Activated naive CD4-positive, alpha-beta T cell treated with anti-CD3 and anti-CD28 coated beads for 36 hours (primary cell): ENCODE measurements at regions of chr3 and their contacts with region 1.

Region 1: DNA sequence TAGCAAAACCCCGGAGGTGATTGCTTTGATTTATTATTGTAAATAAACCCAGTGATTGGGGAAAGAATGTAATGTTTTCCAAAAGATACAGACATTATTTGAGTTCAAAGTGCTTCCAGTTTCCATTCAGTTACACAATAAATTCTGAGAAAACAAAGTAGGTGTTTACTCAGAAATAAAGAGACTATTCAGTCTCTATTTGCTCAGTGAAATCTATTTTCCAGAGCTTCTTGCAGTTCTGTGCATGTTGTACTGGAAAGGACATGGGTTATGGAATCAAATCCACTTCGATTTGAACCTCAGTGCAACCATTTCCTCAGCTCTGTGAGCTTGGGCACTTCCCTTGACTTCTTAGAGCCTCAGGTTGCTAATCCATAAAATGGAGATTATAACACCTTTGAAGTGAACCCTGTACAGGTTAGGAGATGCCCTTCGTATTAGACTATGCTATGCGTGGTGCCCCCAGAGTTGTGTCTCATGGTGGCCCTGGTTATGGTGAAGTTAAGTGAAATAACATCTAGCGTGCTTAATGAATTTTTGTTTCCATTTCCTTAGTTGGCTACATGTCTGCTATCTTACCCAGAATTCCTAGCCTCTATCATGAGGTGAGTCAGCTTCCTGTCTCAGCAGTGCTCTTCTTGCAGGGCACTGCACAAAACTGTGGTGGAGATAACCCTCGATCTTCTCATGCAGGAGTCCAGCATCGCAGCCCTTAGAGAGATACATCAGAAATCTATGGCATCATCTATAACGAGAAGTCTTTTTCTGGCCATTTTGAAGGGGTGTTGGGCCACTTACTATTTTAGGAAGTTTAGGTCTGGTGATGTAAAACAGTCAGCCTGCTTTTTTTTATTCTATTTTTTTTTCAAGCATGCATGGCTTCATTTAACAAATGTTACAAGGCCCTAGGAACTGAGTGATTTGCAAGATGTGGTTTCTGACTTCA is 97.7 kb downstream of the RPL39L start:
- DNase-seq: peak; percentile 73
- H3K4me3 Mint-ChIP-seq: peak overlapping the region; percentile 60
- H3K27ac Mint-ChIP-seq: peak overlapping the region; percentile 98
- H3K4me1 Mint-ChIP-seq: peaks cover 82% of the 10 kb centered on the region
- H3K27me3 Mint-ChIP-seq: no peaks in the 10 kb centered on the region

Region 2: DNA sequence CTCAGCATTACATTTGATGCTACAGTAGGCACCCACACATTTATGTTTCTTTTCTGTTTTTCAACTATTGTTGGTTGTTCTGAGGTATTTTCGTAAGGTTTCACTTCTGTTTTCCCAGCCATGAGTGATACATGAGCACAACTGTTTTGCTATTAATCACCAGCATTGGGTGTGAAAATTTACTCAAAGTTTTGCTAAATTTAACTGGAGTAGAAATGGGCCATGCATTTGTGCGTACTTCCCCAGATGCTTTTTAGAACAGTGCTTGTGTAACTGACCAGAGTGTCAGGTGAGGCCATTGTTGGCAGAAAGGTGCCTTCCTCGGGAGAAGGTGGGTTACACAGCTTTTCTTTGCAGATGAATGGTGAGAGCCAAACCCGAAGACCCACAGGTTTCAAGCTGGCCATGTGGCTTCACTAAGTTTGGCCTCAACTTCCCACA is 40.9 kb before region 1 on chr3:
- CTCF ChIA-PET with region 1: interaction called, 3 read pairs
- intact Hi-C with region 1: loop called (anchors 1 kb)
- DNase-seq: peak; percentile 76
- H3K4me3 Mint-ChIP-seq: peak overlapping the region; percentile 25
- H3K27ac Mint-ChIP-seq: peak overlapping the region; percentile 90
- H3K4me1 Mint-ChIP-seq: peaks cover 76% of the 10 kb centered on the region
- H3K27me3 Mint-ChIP-seq: no peaks in the 10 kb centered on the region

Region 3: GRCh38 chr3:187011915-187012314 is 29.7 kb before region 1 on chr3:
- CTCF ChIA-PET with region 1: no interaction called
- intact Hi-C with region 1: loop called (anchors 2 kb)
- DNase-seq: no peak
- H3K4me3 Mint-ChIP-seq: no peak overlapping the region
- H3K27ac Mint-ChIP-seq: peak overlapping the region; percentile 87
- H3K4me1 Mint-ChIP-seq: peaks cover 63% of the 10 kb centered on the region
- H3K27me3 Mint-ChIP-seq: no peaks in the 10 kb centered on the region

Region 4: DNA sequence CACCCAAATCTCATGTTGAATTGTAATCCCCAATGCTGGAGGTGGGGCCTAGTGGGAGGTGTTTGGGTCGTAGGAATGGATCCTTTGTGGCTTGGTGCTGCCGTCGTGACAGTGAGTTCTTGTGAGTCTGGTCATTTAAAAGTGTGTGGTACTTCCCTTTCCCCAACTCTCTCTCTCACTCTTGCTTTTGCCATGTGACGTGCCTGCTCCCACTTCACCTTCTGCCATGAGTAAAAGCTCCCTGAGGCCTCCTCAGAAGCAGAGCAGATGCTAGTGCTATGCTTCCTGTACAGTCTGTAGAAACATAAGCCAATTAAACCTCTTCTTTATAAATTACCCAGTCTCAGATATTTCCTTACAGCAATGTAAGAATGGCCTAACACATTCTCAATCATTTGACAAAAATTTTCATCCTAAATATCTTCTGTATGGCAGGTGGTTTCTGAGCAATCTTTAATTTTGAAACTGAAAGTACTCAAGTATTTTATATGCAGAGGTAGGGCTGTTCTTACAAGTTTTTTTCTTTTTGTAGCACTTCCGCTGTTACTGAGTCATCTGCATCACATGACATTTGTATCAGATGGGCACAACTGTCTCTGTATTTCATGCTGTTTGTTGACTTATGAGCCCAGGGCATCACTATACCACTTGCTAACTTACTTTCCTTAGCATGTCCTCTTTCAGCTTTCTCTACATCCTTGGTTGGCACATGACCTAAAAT is 88.9 kb after region 1 on chr3:
- CTCF ChIA-PET with region 1: no interaction called
- intact Hi-C with region 1: loop called (anchors 1 kb)
- DNase-seq: peak; percentile 64
- H3K4me3 Mint-ChIP-seq: peak overlapping the region; percentile 42
- H3K27ac Mint-ChIP-seq: peak overlapping the region; percentile 98
- H3K4me1 Mint-ChIP-seq: peaks cover 40% of the 10 kb centered on the region
- H3K27me3 Mint-ChIP-seq: no peaks in the 10 kb centered on the region

Region 5: GRCh38 chr3:187139126-187139894 is 97.7 kb after region 1 on chr3 and contains the start of gene RPL39L:
- CTCF ChIA-PET with region 1: no interaction called
- intact Hi-C with region 1: loop called (anchors 2 kb)
- DNase-seq: peak; percentile 95
- H3K4me3 Mint-ChIP-seq: peak within 1 kb of the TSS; percentile 91
- H3K27ac Mint-ChIP-seq: peak within 1 kb of the TSS; percentile 95
- H3K4me1 Mint-ChIP-seq: peaks cover 21% of the 10 kb centered on the region
- H3K27me3 Mint-ChIP-seq: no peaks in the 10 kb centered on the region
- total RNA-seq, gene RPL39L: 19.2 to 20.9 TPM

Region 6: GRCh38 chr3:187227658-187228258 is 186.1 kb after region 1 on chr3:
- CTCF ChIA-PET with region 1: no interaction called
- intact Hi-C with region 1: no loop called
- DNase-seq: no peak
- H3K4me3 Mint-ChIP-seq: no peak overlapping the region
- H3K27ac Mint-ChIP-seq: no peak overlapping the region
- H3K4me1 Mint-ChIP-seq: no peaks in the 10 kb centered on the region
- H3K27me3 Mint-ChIP-seq: no peaks in the 10 kb centered on the region

Region 7: DNA sequence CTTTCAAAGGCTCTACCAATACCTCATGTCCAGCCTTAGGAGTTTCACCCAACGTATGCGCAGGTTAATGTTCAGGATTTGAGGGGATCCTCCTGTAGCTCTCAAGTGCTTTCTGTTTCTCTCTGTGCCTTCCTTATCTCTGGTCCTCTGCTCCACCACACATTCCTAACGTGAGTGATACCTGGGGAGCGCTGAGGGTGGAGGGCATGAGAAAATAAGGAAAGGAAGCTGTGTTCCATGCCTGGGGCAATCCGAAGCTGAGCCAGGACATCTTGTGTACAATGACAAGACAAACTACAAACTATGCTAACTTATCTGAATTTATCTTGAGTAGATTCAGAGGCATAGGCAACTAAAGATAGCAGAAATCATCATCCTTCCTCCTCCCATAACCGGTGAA is 492.2 kb after region 1 on chr3:
- CTCF ChIA-PET with region 1: no interaction called
- intact Hi-C with region 1: no loop called
- DNase-seq: no peak
- H3K4me3 Mint-ChIP-seq: no peak overlapping the region
- H3K27ac Mint-ChIP-seq: no peak overlapping the region
- H3K4me1 Mint-ChIP-seq: no peaks in the 10 kb centered on the region
- H3K27me3 Mint-ChIP-seq: peaks cover 10% of the 10 kb centered on the region